ENCODE measurements at regions of chr1 and their contacts with region 1.

Region 1: GRCh38 chr1:245751116-245751515 is 596.3 kb downstream of the KIF26B start:
- DNase-seq: no peak
- ATAC-seq: no peak
- H3K4me3 ChIP-seq: no peak overlapping the region
- H3K4me3 Mint-ChIP-seq: no peak overlapping the region
- H3K27ac ChIP-seq: no peak overlapping the region
- H3K27ac Mint-ChIP-seq: no peak overlapping the region
- H3K4me1 ChIP-seq: no peaks in the 10 kb centered on the region
- H3K4me1 Mint-ChIP-seq: peaks cover 0 to 9% (median 0%) of the 10 kb centered on the region in 7 donors
- H3K27me3 ChIP-seq: no peaks in the 10 kb centered on the region
- H3K27me3 Mint-ChIP-seq: no peaks in the 10 kb centered on the region

Region 2: GRCh38 chr1:245673881-245674414 is 77.2 kb before region 1 on chr1:
- CTCF ChIA-PET with region 1: no interaction called
- POLR2A ChIA-PET with region 1: no interaction called
- intact Hi-C with region 1: no loop called
- DNase-seq: no peak
- ATAC-seq: peak; percentile 67
- H3K4me3 ChIP-seq: no peak overlapping the region
- H3K4me3 Mint-ChIP-seq: no peak overlapping the region
- H3K27ac ChIP-seq: no peak overlapping the region
- H3K27ac Mint-ChIP-seq: no peak overlapping the region
- H3K4me1 ChIP-seq: no peaks in the 10 kb centered on the region
- H3K4me1 Mint-ChIP-seq: no peaks in the 10 kb centered on the region
- H3K27me3 ChIP-seq: no peaks in the 10 kb centered on the region
- H3K27me3 Mint-ChIP-seq: no peaks in the 10 kb centered on the region

Region 3: DNA sequence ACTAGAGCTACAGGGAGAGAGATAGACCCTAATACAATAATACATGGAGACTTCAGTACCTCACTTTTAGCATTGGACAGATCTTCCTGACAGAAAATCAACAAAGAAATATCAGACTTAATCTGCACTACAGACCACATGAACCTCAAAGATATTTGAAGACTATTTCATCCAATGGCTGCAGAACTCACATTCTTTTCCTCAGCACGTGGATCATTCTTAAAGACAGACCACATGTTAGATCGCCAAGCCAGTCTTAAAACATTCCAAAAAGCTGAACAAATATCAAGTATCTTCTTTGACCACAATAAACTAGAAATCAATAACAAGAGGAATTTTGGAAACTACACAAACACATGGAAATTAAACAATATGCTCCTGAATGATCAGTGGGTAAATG is 20.3 kb before region 1 on chr1:
- CTCF ChIA-PET with region 1: no interaction called
- POLR2A ChIA-PET with region 1: interaction called, 10 read pairs
- intact Hi-C with region 1: no loop called
- DNase-seq: no peak
- ATAC-seq: no peak
- H3K4me3 ChIP-seq: no peak overlapping the region
- H3K4me3 Mint-ChIP-seq: no peak overlapping the region
- H3K27ac ChIP-seq: no peak overlapping the region
- H3K27ac Mint-ChIP-seq: no peak overlapping the region
- H3K4me1 ChIP-seq: no peaks in the 10 kb centered on the region
- H3K4me1 Mint-ChIP-seq: no peaks in the 10 kb centered on the region
- H3K27me3 ChIP-seq: no peaks in the 10 kb centered on the region
- H3K27me3 Mint-ChIP-seq: peaks cover 0 to 2% (median 0%) of the 10 kb centered on the region in 5 donors

Region 4: DNA sequence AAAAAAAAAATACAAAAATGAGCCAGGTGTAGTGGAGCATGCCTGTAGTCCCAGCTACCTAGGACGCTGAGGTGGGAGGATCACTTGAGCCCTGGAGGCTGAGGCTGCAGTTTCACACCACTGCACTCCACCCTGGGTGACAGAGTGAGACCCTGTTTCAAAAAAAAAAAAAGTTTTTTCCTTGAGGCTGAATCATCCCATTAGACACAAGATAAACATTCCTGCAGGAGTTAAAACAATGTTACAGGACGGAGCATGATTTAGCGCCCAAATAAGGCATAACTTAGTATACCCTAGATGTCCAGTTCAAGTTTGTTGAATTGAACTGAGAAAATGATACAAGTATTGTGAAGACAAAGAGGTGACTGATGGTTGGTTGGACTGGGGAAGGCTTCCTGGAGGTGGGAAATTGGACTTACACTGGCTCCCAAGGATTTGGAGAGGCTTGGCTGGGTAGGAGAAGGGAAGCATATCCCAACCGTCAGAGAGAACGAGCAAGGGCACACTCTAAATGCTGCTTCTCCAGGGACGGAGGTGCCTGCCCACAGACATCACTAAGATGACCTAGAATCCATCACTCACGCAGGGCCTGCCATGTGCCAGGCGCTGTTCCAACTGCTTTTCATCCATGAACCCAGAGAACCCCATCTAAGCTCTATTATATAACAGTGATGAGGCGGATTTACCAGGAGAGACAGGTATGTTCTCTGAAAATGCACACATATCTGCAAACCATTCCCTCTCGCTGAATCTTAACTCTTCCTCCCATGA is 14.3 kb after region 1 on chr1:
- CTCF ChIA-PET with region 1: no interaction called
- POLR2A ChIA-PET with region 1: no interaction called
- intact Hi-C with region 1: no loop called
- DNase-seq: no peak
- ATAC-seq: no peak
- H3K4me3 ChIP-seq: no peak overlapping the region
- H3K4me3 Mint-ChIP-seq: no peak overlapping the region
- H3K27ac ChIP-seq: no peak overlapping the region
- H3K27ac Mint-ChIP-seq: no peak overlapping the region
- H3K4me1 ChIP-seq: no peaks in the 10 kb centered on the region
- H3K4me1 Mint-ChIP-seq: peaks cover 0 to 5% (median 0%) of the 10 kb centered on the region in 7 donors
- H3K27me3 ChIP-seq: no peaks in the 10 kb centered on the region
- H3K27me3 Mint-ChIP-seq: no peaks in the 10 kb centered on the region

Region 5: GRCh38 chr1:246081886-246082600 is 330.9 kb after region 1 on chr1:
- CTCF ChIA-PET with region 1: no interaction called
- POLR2A ChIA-PET with region 1: no interaction called
- intact Hi-C with region 1: no loop called
- DNase-seq: no peak
- ATAC-seq: no peak
- H3K4me3 ChIP-seq: no peak overlapping the region
- H3K4me3 Mint-ChIP-seq: no peak overlapping the region
- H3K27ac ChIP-seq: no peak overlapping the region
- H3K27ac Mint-ChIP-seq: no peak overlapping the region
- H3K4me1 ChIP-seq: no peaks in the 10 kb centered on the region
- H3K4me1 Mint-ChIP-seq: peaks cover 0 to 5% (median 0%) of the 10 kb centered on the region in 7 donors
- H3K27me3 ChIP-seq: no peaks in the 10 kb centered on the region
- H3K27me3 Mint-ChIP-seq: no peaks in the 10 kb centered on the region

Region 6: GRCh38 chr1:246608616-246609376 is 857.7 kb after region 1 on chr1:
- CTCF ChIA-PET with region 1: no interaction called
- POLR2A ChIA-PET with region 1: no interaction called
- intact Hi-C with region 1: no loop called
- DNase-seq: no peak
- ATAC-seq: peak; percentile 91
- H3K4me3 ChIP-seq: no peak overlapping the region
- H3K4me3 Mint-ChIP-seq: peak overlapping the region in 4 of 10 donors; percentile 8 to 48 (median 30)
- H3K27ac ChIP-seq: no peak overlapping the region
- H3K27ac Mint-ChIP-seq: peak overlapping the region in 8 of 9 donors; percentile 23 to 81 (median 58)
- H3K4me1 ChIP-seq: peaks cover 0 to 8% of the 10 kb centered on the region in 2 donors
- H3K4me1 Mint-ChIP-seq: peaks cover 32 to 83% (median 61%) of the 10 kb centered on the region in 7 donors
- H3K27me3 ChIP-seq: no peaks in the 10 kb centered on the region
- H3K27me3 Mint-ChIP-seq: no peaks in the 10 kb centered on the region